PC-3 (cell line): ENCODE measurements at regions of chr6 and their contacts with region 1.

Region 1: DNA sequence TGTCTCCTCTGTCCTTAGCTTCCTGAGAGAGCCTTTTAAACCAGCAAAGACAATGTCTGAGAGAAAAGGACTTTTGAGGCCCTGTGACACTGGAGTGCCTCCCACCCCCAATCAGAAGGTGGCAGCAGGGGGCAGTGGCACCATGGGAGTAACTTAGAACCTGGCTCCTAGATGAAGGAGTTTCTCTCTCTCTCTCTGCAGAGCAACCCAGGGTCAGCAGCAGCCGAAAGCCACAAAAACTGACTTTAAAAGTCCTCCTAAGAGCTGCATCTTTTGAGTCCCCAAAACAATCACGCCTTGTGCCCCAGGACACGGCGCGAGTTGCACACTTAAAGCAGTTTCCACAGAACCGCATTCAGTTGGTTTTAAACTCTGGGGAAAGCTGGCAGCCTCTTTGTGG is 5.3 kb upstream of the TCP11 start:
- DNase-seq: peak; percentile 81
- ATAC-seq: peak; percentile 75
- H3K4me3 ChIP-seq: no peak overlapping the region
- H3K27ac ChIP-seq: no peak overlapping the region
- H3K4me1 ChIP-seq: peaks cover 49% of the 10 kb centered on the region
- H3K27me3 ChIP-seq: no peaks in the 10 kb centered on the region
- CTCF ChIP-seq: peak; percentile 93

Region 2: DNA sequence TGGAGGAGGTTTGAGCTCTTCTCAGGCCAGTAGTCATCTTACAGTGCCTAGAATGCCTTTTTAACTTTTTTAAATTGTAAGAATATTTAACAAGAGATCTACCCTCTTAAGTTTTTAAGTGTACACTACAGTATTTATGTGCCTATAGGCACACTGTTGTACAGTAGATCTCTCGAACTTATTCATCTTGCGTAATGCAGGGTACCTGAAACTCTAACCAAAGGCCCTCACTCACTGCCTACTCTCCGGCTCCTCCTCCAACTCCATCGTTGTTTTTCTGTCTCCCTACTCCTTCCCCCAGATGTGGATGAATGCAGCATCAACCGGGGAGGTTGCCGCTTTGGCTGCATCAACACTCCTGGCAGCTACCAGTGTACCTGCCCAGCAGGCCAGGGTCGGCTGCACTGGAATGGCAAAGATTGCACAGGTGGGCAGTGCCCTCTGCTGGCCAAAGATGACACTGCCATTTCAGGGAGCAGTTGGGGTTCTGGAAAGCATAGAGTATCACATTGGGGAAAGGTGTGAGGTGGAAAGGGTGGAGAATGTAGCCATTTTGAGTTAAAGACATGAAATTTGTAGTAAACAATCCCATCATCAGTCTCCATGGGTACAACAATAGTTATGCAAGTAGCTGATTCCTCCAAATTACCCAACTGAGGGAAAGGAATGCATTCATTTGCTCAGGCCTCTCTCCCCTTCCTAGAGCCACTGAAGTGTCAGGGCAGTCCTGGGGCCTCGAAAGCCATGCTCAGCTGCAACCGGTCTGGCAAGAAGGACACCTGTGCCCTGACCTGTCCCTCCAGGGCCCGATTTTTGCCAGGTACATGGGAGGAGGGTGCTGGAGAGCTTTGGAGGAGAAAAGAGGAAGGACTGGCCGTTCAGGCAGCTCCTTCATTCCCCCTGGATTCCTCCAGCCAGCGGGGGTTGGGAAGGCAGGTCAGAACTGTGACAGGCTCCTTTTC is 94.7 kb after region 1 on chr6:
- CTCF ChIA-PET with region 1: interaction called, 16 read pairs
- POLR2A ChIA-PET with region 1: interaction called, 6 read pairs
- intact Hi-C with region 1: loop called (anchors 1 kb)
- DNase-seq: peak; percentile 88
- ATAC-seq: peak; percentile 98
- H3K4me3 ChIP-seq: no peak overlapping the region
- H3K27ac ChIP-seq: no peak overlapping the region
- H3K4me1 ChIP-seq: no peaks in the 10 kb centered on the region; the same call in 1 of the 2 replicates
- H3K27me3 ChIP-seq: no peaks in the 10 kb centered on the region
- CTCF ChIP-seq: peak; percentile 99

Region 3: GRCh38 chr6:35253249-35253648 is 106.8 kb after region 1 on chr6:
- CTCF ChIA-PET with region 1: no interaction called
- POLR2A ChIA-PET with region 1: no interaction called
- intact Hi-C with region 1: no loop called
- DNase-seq: no peak
- ATAC-seq: no peak
- H3K4me3 ChIP-seq: no peak overlapping the region
- H3K27ac ChIP-seq: no peak overlapping the region
- H3K4me1 ChIP-seq: 0 out of 2 replicates have a peak, but pooled peaks cover 2% of the 10 kb centered on the region
- H3K27me3 ChIP-seq: no peaks in the 10 kb centered on the region
- CTCF ChIP-seq: no peak